GM13977 (cell line): ENCODE measurements at regions of chr7 and their contacts with region 1.

Region 1: DNA sequence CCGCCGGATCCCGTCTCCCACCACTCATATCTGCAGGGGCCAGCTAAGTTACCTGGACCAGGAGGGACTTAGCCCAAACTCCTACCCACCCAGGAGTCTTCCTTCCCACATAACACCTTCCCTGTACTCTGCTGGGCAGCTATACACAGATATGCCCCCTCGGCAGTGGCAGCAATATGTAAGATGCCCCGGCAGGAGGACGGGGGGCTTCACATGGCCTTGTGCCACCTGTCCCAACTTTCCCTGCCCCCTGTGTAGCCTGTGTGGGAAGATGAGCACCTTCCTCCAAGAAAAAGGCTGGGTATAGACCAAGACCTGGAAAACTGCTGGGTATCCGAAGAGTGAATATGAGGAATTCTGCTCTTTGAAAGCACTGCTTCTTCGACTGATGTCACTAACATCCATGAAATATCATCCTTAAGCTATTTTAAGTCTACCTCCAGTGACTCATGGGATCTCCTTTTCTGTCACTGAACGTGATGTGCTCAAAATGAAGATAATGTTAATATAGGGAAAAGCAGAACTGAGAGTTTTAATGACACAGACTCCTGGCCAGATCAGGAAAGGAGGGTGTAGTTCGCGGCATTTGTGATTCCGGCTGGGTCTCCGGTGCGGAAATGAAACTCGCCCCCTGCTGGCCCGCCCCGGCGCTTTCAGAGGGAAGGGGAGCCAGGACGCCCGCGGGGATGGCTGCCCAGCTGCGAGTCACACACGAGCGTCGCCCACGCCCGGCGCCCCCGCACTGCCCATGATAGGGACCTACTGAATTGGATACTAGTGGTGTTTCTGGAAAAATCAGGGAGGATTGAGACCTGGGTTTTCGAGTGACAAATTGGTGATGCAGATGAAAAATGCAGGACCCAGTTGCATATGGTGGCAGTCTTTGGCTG is 256.9 kb upstream of the NFE2L3 start:
- DNase-seq: peak; percentile 65
- CTCF ChIP-seq: peak; percentile 65

Region 2: DNA sequence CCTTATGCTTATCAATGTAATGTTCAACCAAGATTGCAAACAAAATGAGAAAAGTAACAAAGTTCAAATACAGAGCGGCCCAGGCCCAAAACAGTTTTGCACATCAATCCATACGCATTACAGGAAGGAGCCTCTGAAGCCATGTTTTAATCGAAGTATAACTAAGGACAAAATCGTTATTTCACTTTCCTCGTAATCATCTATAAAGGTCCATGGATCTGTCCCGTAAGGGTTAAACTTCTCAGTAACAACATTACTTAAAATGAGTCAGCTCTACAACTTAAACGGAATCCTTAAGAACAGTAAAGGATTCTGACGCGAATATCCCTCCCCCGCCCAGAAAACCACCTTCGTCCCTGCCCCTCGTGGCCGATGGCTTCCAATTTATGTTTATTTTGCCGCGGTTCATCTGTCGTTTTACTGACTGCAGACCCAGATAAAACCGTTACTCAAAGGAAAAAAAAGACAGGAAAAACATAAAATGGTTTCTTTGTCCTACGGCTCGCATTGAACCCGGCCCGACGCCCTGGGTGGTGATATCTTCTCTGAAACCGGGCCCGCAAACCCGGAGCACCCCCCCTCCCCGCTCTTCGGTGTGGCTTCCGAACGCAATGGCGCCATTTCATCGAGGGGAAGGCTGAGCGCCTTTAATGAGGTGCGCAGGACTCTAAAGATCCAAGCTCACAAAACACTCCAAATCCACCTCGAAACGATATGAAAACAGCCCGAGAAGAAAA is 304.3 kb after region 1 on chr7:
- in situ Hi-C with region 1: loop called (anchors 25 kb)
- DNase-seq: no peak
- CTCF ChIP-seq: no peak

Region 3: GRCh38 chr7:26365077-26365900 is 470.1 kb after region 1 on chr7:
- in situ Hi-C with region 1: loop called (anchors 5 kb)
- DNase-seq: peak; percentile 34
- CTCF ChIP-seq: peak; percentile 66

Region 4: DNA sequence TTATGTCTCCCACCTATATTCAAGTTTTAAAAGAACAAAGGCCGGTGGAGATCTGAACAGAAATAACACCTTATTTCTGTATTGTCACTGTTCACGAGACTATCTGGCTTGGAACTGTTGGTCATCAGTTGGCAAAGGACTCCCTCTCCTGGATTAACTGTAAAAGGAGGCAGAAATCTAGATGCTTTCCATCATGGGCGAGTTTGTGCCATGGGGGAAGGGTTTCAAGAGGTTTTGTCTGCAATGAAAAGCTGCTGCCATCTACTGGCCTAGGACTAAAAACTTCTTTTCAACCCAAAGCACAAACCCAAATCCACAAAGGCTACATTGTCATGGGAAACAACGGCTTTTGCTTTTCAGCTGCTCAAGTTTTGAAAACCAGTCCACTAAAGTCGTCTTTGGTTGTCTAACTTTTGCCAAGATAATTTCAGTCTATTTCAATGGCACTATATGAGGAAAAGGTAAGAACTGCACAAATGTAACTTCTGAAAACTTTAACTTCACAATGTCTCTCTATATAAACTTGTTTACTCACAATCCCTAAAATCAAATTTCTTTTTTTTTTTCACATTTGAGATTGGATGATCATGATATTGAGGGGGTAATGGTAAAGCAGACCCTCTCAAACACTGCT is 772.5 kb after region 1 on chr7:
- in situ Hi-C with region 1: loop called (anchors 25 kb)
- DNase-seq: no peak
- CTCF ChIP-seq: peak; percentile 65